ENCODE measurements at regions of chr1 and their contacts with region 1.

Region 1: GRCh38 chr1:112715264-112716053 is at the start of gene PPM1J:
- DNase-seq: peak; percentile 92 to 99
- H3K4me3 ChIP-seq: peak within 1 kb of the TSS; percentile 85
- H3K27ac ChIP-seq: no peak within 1 kb of the TSS
- H3K4me1 ChIP-seq: peaks cover 18% of the 10 kb centered on the region
- H3K27me3 ChIP-seq: no peaks in the 10 kb centered on the region
- CTCF ChIP-seq: no peak
- total RNA-seq, gene PPM1J: 6.0 and 7.7 TPM in 2 replicates

Region 2: GRCh38 chr1:111062081-111062480 is 1653.4 kb before region 1 on chr1:
- CTCF ChIA-PET with region 1: no interaction called
- POLR2A ChIA-PET with region 1: no interaction called
- intact Hi-C with region 1: no loop called
- DNase-seq: no peak
- H3K4me3 ChIP-seq: peak overlapping the region; percentile 21; the same call in 1 of the 2 replicates
- H3K27ac ChIP-seq: peak overlapping the region; percentile 81
- H3K4me1 ChIP-seq: peaks cover 23% of the 10 kb centered on the region
- H3K27me3 ChIP-seq: no peaks in the 10 kb centered on the region
- CTCF ChIP-seq: no peak

Region 3: GRCh38 chr1:112501810-112502641 is 213.4 kb before region 1 on chr1:
- CTCF ChIA-PET with region 1: interaction called, 15 read pairs
- POLR2A ChIA-PET with region 1: no interaction called
- intact Hi-C with region 1: no loop called
- DNase-seq: peak; percentile 55 to 70
- H3K4me3 ChIP-seq: peak overlapping the region; percentile 56
- H3K27ac ChIP-seq: no peak overlapping the region
- H3K4me1 ChIP-seq: 0 out of 2 replicates have a peak, but pooled peaks cover 4% of the 10 kb centered on the region
- H3K27me3 ChIP-seq: no peaks in the 10 kb centered on the region
- CTCF ChIP-seq: peak; percentile 72

Region 4: DNA sequence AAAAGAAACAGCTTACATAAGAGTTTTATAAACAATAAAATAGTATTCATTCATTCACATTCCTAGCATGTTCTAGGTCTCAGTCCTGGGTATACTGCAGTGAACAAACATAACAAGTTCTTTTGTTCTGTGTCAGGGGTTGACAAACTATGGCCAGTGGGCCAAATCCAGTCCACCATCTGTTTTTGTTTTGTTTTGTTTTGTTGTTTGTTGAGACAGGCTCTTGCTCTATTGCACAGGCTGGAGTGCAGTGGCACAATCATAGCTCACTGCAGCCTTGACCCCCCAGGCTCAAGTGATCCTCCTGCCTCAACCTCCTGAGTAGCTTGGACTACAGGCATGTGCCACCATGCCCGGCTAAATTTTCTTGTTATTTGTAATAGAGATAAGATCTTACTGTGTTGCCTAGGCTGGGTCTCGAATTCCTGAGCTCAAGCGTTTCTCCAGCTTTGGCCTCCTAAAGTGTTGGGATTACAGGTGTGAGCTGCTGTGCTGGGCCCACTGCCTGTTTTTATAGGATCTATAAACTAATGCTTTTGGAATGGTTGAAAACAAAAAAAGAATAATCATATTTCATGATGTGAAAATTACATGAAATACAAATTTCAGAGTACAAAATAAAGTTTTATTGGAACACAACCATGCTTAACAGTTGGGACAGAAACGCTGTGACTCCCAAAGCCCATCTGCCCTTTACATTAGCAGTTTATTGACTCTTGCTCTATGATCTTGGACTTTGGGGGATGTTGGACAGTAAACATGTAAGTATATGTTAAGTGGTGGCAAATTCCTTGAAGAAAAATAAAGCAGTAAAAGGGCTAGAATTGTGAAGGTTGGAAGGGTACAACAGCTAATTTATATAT is 78.0 kb before region 1 on chr1:
- CTCF ChIA-PET with region 1: no interaction called
- POLR2A ChIA-PET with region 1: no interaction called
- intact Hi-C with region 1: no loop called
- DNase-seq: peak; percentile 9 to 69
- H3K4me3 ChIP-seq: no peak overlapping the region
- H3K27ac ChIP-seq: peak overlapping the region; percentile 59
- H3K4me1 ChIP-seq: peaks cover 40% of the 10 kb centered on the region
- H3K27me3 ChIP-seq: no peaks in the 10 kb centered on the region
- CTCF ChIP-seq: no peak

Region 5: GRCh38 chr1:112788561-112788960 is 73.1 kb after region 1 on chr1:
- CTCF ChIA-PET with region 1: no interaction called
- POLR2A ChIA-PET with region 1: no interaction called
- intact Hi-C with region 1: no loop called
- DNase-seq: no peak
- H3K4me3 ChIP-seq: no peak overlapping the region
- H3K27ac ChIP-seq: no peak overlapping the region
- H3K4me1 ChIP-seq: peaks cover 12% of the 10 kb centered on the region
- H3K27me3 ChIP-seq: no peaks in the 10 kb centered on the region
- CTCF ChIP-seq: no peak

Region 6: GRCh38 chr1:112866151-112866550 is 150.7 kb after region 1 on chr1:
- CTCF ChIA-PET with region 1: no interaction called
- POLR2A ChIA-PET with region 1: no interaction called
- intact Hi-C with region 1: loop called (anchors 5 kb)
- DNase-seq: peak; percentile 60 to 91
- H3K4me3 ChIP-seq: no peak overlapping the region
- H3K27ac ChIP-seq: peak overlapping the region; percentile 67
- H3K4me1 ChIP-seq: peaks cover 49% of the 10 kb centered on the region
- H3K27me3 ChIP-seq: no peaks in the 10 kb centered on the region
- CTCF ChIP-seq: no peak

Region 7: GRCh38 chr1:112955781-112956543 is 240.5 kb after region 1 on chr1 and contains the start of gene SLC16A1:
- CTCF ChIA-PET with region 1: no interaction called
- POLR2A ChIA-PET with region 1: no interaction called
- intact Hi-C with region 1: loop called (anchors 5 kb)
- DNase-seq: peak; percentile 81 to 92
- H3K4me3 ChIP-seq: peak within 1 kb of the TSS; percentile 82
- H3K27ac ChIP-seq: peak within 1 kb of the TSS; percentile 73
- H3K4me1 ChIP-seq: peaks cover 36% of the 10 kb centered on the region
- H3K27me3 ChIP-seq: no peaks in the 10 kb centered on the region
- CTCF ChIP-seq: peak; percentile 31
- total RNA-seq, gene SLC16A1: 52.9 and 74.6 TPM in 2 replicates

Region 8: DNA sequence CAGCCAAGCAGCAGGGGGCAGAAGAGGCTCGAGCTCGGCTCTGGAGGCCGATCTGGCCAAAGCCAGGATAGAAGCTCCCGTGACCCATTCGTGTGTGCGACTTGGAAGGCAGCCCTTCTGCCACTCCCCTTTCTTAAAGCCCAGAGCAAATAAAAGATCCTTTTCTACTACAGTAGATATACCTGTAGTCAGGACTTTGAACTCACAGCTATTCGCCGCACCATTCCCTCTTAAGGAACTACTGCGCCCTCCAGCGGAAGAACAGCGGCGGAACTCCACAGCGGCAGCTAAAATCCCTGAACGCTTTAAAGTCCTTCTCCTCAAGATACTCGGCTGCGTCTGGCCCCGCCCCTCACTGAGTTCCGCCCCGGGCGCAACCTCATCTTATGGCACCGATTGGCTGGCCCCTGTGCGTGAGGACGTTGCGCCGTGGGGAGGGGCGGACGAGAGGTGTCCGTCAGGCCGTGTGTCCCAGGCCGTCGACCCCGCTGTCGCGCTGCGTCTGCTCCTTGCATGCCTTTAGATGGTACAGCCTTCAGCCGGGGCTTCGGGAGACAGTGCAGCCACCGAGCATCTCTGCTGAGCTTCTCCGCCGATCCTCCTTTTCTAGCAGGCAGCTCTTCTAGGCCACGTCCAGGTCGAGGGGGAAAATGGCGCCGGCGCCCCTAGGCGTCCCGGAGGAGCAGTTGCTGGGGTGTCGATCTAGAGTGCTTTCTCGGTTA is 357.5 kb after region 1 on chr1 and contains the start of gene LRIG2:
- CTCF ChIA-PET with region 1: interaction called, 15 read pairs
- POLR2A ChIA-PET with region 1: interaction called, 3 read pairs
- intact Hi-C with region 1: loop called (anchors 2 kb)
- DNase-seq: peak; percentile 99
- H3K4me3 ChIP-seq: peak within 1 kb of the TSS; percentile 85
- H3K27ac ChIP-seq: peak within 1 kb of the TSS; percentile 78
- H3K4me1 ChIP-seq: peaks cover 20% of the 10 kb centered on the region
- H3K27me3 ChIP-seq: no peaks in the 10 kb centered on the region
- CTCF ChIP-seq: peak; percentile 94
- total RNA-seq, gene LRIG2: 9.4 and 10.6 TPM in 2 replicates

Region 9: GRCh38 chr1:113170519-113170918 is 455.1 kb after region 1 on chr1:
- CTCF ChIA-PET with region 1: no interaction called
- POLR2A ChIA-PET with region 1: no interaction called
- intact Hi-C with region 1: no loop called
- DNase-seq: no peak
- H3K4me3 ChIP-seq: no peak overlapping the region
- H3K27ac ChIP-seq: no peak overlapping the region
- H3K4me1 ChIP-seq: no peaks in the 10 kb centered on the region
- H3K27me3 ChIP-seq: no peaks in the 10 kb centered on the region
- CTCF ChIP-seq: no peak

Region 10: GRCh38 chr1:113677250-113678158 is 962.0 kb after region 1 on chr1:
- CTCF ChIA-PET with region 1: no interaction called
- POLR2A ChIA-PET with region 1: no interaction called
- intact Hi-C with region 1: loop called (anchors 5 kb)
- DNase-seq: peak in 1 of 2 experiments; percentile 59
- H3K4me3 ChIP-seq: no peak overlapping the region
- H3K27ac ChIP-seq: no peak overlapping the region
- H3K4me1 ChIP-seq: peaks cover 17% of the 10 kb centered on the region
- H3K27me3 ChIP-seq: no peaks in the 10 kb centered on the region
- CTCF ChIP-seq: peak; percentile 97

Measured in PC-9 (cell line).